ENCODE measurements at regions of chr7 and their contacts with region 1.

Region 1: DNA sequence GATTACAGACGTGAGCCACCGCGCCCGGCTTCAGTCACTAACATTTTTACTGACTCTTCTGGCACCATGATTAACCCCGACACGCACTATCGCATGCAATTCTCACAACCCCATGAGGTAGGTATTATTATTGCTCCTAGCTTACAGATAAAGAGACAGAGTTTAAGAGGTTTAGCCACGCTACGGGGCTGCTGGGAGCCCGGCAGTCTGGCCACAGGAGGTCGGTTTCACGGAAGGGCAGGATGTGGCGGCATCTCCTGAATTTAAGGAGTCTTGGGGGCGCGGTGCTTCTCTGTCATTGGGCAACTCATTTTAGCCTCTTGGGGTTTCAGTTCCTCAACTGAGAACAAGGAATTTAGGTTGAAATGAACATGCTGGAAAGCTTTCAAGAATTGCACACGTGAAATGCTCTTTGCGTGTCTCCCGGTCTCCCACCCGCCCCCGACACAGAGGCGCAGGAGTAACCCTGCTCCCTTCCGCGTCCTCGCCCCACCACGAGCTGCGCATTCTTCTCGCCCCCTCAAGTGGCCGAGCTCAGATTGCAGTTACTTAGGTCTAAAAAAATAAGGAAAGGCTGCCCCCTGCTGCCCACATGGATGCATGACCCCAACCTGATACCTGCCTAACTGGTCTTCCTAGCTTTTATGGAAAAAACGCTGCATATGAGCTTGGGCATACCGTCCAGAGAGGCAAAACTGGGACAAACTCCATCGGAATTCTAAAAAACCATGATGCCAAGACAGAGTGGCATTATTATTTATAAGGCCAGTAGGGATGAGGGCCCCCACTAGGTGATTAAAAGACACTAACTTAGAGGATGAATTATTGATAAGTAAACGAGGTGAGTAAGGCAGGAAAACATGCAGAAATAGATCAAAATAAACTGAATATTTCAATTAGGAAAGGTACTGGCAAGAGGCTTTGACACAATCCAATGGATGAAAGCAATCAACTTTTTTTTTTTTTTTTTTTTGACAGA is 12.4 kb downstream of the PRSS2 start:
- DNase-seq: peak; percentile 74 to 84
- ATAC-seq: peak; percentile 80 to 88
- H3K4me3 ChIP-seq: peak overlapping the region; percentile 37 to 64 (median 53)
- H3K27ac ChIP-seq: no peak overlapping the region
- H3K4me1 ChIP-seq: no peaks in the 10 kb centered on the region
- H3K27me3 ChIP-seq: no peaks in the 10 kb centered on the region
- CTCF ChIP-seq: peak; percentile 89 to 97 (median 94)
- POLR2A ChIP-seq: no peak

Region 2: GRCh38 chr7:142535123-142535779 is 248.0 kb before region 1 on chr7:
- in situ Hi-C with region 1: loop called in 1 of 4 experiments (anchors 10 kb)
- intact Hi-C with region 1: loop called (anchors 1 kb)
- DNase-seq: peak; percentile 35 to 50
- ATAC-seq: peak; percentile 94 to 99
- H3K4me3 ChIP-seq: no peak overlapping the region
- H3K27ac ChIP-seq: no peak overlapping the region
- H3K4me1 ChIP-seq: no peaks in the 10 kb centered on the region
- H3K27me3 ChIP-seq: no peaks in the 10 kb centered on the region
- CTCF ChIP-seq: peak; percentile 60 to 82 (median 75)
- POLR2A ChIP-seq: no peak

Region 3: DNA sequence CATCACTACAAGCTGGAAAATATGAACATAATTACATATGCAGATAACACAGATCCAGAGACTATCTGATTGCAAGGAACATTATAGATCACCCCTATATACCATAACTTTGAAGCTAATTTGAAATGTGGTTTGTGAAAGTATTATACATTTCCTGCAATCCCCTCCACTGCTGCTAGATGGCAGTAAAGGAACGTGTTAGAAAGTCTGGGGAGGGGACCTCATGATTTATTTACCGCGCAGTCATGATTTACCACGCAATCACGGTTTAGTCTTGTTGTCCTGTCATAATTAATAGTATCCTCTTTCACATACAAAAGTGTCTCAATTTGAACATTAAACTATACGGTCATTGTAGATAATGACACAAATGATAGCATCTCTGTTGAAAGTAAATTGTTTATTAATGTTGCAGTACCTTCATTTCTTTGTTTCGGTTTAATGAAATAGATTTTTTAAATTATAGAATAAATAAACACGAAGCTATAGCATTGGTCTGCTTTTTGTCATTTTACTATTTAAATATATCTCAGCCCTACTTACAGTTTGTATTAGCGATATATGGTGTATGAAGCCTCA is 179.3 kb before region 1 on chr7:
- in situ Hi-C with region 1: loop called in 1 of 4 experiments (anchors 10 kb)
- intact Hi-C with region 1: loop called (anchors 1 kb)
- DNase-seq: peak; percentile 32 to 38
- ATAC-seq: peak; percentile 38 to 75
- H3K4me3 ChIP-seq: peak overlapping the region in 3 of 4 donors; percentile 12 to 36 (median 14)
- H3K27ac ChIP-seq: peak overlapping the region in 2 of 4 donors; percentile 2 to 20
- H3K4me1 ChIP-seq: peaks cover 6 to 11% of the 10 kb centered on the region in 2 donors
- H3K27me3 ChIP-seq: no peaks in the 10 kb centered on the region
- CTCF ChIP-seq: peak; percentile 71 to 89 (median 86)
- POLR2A ChIP-seq: no peak

Region 4: GRCh38 chr7:142632291-142633134 is 150.7 kb before region 1 on chr7:
- in situ Hi-C with region 1: loop called (anchors 10 to 25 kb)
- intact Hi-C with region 1: loop called (anchors 1 kb)
- DNase-seq: peak; percentile 18 to 49
- ATAC-seq: peak; percentile 76 to 77
- H3K4me3 ChIP-seq: no peak overlapping the region
- H3K27ac ChIP-seq: no peak overlapping the region
- H3K4me1 ChIP-seq: peaks cover 0 to 11% of the 10 kb centered on the region in 2 donors
- H3K27me3 ChIP-seq: no peaks in the 10 kb centered on the region
- CTCF ChIP-seq: peak; percentile 69 to 81 (median 77)
- POLR2A ChIP-seq: no peak

Region 5: GRCh38 chr7:142711746-142712619 is 71.2 kb before region 1 on chr7:
- in situ Hi-C with region 1: loop called in 2 of 4 experiments (anchors 5 kb)
- intact Hi-C with region 1: loop called (anchors 2 kb)
- DNase-seq: no peak
- ATAC-seq: no peak
- H3K4me3 ChIP-seq: no peak overlapping the region
- H3K27ac ChIP-seq: no peak overlapping the region
- H3K4me1 ChIP-seq: peaks cover 7 to 8% of the 10 kb centered on the region in 2 donors
- H3K27me3 ChIP-seq: no peaks in the 10 kb centered on the region
- CTCF ChIP-seq: peak; percentile 35 to 61 (median 41)
- POLR2A ChIP-seq: no peak